ENCODE measurements at regions of chr1 and their contacts with region 1.

Region 1: DNA sequence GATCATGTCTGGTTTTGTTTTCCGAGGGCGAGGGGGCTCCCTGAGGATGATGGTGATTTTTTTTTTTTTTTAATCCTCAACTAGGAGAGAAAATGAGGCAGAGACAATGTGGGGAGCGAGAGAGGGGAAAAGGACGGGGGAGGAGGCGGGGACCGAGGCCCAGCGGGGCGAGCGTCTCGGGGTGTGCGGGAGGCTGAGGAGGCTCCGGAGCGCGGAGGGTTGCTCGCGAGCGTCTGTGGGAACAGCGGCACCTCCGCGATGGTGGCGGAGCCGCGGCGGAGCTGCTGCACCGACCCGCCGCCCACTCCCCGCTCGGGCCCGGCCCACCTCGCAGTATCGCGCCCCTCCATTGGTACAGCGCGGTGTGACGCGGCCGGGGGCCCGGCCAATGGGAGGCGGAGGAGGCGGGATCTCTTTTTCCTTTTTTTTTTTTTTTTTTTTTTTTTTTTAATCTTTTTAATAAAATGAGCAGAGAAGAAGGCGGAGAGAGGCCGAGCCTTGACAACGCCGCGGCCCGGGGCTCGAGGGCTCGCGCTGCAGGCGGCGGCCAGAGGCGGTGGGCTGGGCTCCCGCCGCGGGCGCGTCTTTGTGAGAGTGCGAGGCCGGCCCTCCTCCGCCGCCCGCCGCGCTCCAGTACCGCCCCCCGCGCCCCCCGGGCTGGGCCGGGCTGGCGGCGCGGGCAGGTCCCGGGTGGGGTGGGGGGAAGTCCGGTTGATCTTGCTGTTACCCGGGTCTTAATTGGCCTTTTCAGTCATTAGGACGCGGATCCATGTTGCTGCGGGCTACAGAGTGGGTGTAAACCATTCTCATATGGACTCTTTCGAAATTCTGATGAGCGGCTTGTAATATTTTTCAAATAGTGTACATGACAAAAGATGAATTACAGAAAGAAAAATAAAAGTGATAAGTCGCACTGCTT is at the start of gene RERE:
- DNase-seq: peak; percentile 97
- ATAC-seq: peak; percentile 95
- H3K4me3 Mint-ChIP-seq: peak within 1 kb of the TSS; percentile 77
- H3K27ac Mint-ChIP-seq: peak within 1 kb of the TSS; percentile 96
- H3K4me1 Mint-ChIP-seq: peaks cover 44% of the 10 kb centered on the region
- H3K27me3 Mint-ChIP-seq: peaks cover 2% of the 10 kb centered on the region
- total RNA-seq, gene RERE: 57.4 to 71.6 TPM

Region 2: GRCh38 chr1:8643542-8644536 is 173.8 kb before region 1 on chr1:
- CTCF ChIA-PET with region 1: no interaction called
- POLR2A ChIA-PET with region 1: no interaction called
- intact Hi-C with region 1: no loop called
- DNase-seq: peak; percentile 11
- ATAC-seq: no peak
- H3K4me3 Mint-ChIP-seq: no peak overlapping the region
- H3K27ac Mint-ChIP-seq: no peak overlapping the region
- H3K4me1 Mint-ChIP-seq: peaks cover 40% of the 10 kb centered on the region
- H3K27me3 Mint-ChIP-seq: no peaks in the 10 kb centered on the region

Region 3: GRCh38 chr1:8702850-8703810 is 114.5 kb before region 1 on chr1:
- CTCF ChIA-PET with region 1: no interaction called
- POLR2A ChIA-PET with region 1: no interaction called
- intact Hi-C with region 1: loop called in 1 of 2 experiments (anchors 1 kb)
- DNase-seq: peak; percentile 85
- ATAC-seq: peak; percentile 45
- H3K4me3 Mint-ChIP-seq: peak overlapping the region; percentile 83
- H3K27ac Mint-ChIP-seq: peak overlapping the region; percentile 76
- H3K4me1 Mint-ChIP-seq: peaks cover 32% of the 10 kb centered on the region
- H3K27me3 Mint-ChIP-seq: peaks cover 31% of the 10 kb centered on the region

Region 4: GRCh38 chr1:8848663-8849386 is 31.2 kb after region 1 on chr1:
- CTCF ChIA-PET with region 1: interaction called, 11 read pairs
- POLR2A ChIA-PET with region 1: no interaction called
- intact Hi-C with region 1: loop called in 1 of 2 experiments (anchors 5 kb)
- DNase-seq: peak; percentile 89
- ATAC-seq: peak; percentile 98
- H3K4me3 Mint-ChIP-seq: no peak overlapping the region
- H3K27ac Mint-ChIP-seq: no peak overlapping the region
- H3K4me1 Mint-ChIP-seq: peaks cover 7% of the 10 kb centered on the region
- H3K27me3 Mint-ChIP-seq: no peaks in the 10 kb centered on the region

Region 5: GRCh38 chr1:8873506-8874229 is 56.0 kb after region 1 on chr1:
- CTCF ChIA-PET with region 1: no interaction called
- POLR2A ChIA-PET with region 1: no interaction called
- intact Hi-C with region 1: loop called in 1 of 2 experiments (anchors 1 kb)
- DNase-seq: peak; percentile 92
- ATAC-seq: peak; percentile 68
- H3K4me3 Mint-ChIP-seq: peak overlapping the region; percentile 90
- H3K27ac Mint-ChIP-seq: peak overlapping the region; percentile 99
- H3K4me1 Mint-ChIP-seq: peaks cover 69% of the 10 kb centered on the region
- H3K27me3 Mint-ChIP-seq: no peaks in the 10 kb centered on the region

Region 6: DNA sequence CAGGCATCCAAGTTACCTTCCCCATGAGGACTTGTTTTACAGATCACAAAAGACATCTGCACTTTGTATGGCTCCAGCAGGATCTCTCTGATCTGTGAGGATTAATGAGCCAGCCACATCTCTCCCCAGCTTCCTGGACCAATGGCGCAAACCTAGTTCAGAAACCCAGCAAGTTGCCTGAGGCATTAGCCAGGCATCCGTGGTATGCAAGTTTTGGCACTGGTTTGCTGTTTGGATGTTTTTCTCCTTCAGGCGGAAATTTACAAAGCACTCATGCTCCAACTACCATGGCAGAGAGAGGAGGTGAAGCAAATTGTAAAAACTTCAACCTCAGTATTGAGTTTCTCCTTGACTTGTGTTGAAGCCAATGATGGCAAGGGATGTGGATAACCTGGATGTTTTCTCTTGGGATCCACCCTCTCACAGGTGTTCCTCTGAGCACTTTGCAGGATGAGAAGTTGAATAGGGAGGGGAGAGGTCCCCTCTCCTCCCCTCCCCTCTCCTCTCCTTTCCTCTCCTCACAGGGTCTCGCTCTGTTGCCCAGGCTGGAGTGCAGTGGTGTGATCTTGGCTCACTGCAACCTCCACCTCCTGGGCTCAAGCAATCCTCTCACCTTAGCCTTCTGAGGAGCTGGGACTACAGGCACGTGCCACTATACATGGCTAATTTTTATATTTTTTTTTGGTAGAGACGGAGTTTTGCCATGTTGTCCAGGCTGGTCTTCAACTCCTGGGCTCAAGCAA is 86.4 kb after region 1 on chr1:
- CTCF ChIA-PET with region 1: no interaction called
- POLR2A ChIA-PET with region 1: interaction called, 11 read pairs
- intact Hi-C with region 1: loop called in 1 of 2 experiments (anchors 1 kb)
- DNase-seq: no peak
- ATAC-seq: no peak
- H3K4me3 Mint-ChIP-seq: no peak overlapping the region
- H3K27ac Mint-ChIP-seq: peak overlapping the region; percentile 48
- H3K4me1 Mint-ChIP-seq: peaks cover 46% of the 10 kb centered on the region
- H3K27me3 Mint-ChIP-seq: no peaks in the 10 kb centered on the region

Region 7: DNA sequence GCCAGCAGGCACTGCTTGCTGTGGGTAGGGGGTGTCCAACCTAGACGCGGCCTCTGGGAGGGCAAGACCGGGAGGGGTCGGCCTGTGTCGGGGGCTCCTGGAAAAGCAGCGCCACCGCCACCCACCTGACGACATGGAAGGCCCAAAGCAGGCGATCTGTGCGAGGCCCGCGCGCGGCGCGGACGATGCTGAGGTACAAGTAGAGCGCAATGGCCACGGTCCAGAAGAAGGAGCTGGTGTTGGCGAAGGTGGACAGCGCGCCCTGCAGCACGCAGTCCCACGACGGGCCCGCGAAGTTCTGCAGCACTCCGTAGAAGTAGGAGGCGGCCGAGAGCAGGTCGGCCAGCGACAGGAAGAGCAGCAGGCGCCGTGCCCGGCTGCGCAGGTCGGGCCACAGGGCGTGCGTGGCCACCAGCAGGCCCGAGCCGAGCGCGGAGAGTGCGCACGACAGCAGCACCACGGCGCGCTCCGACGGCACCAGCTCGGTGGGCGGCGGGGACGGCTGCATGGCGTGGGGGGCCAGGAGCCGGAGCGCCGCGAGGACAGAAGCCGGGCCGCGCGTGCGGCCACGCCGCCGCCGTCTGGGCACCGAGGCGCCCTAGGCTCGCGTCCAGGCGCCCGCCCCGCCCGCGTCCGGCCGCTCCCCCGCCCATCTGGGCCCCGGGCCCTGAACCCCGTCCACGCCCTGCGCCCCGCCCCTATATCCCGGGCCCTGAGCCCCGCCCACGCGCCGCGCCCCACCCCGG is 311.0 kb after region 1 on chr1 and contains the start of gene GPR157:
- CTCF ChIA-PET with region 1: no interaction called
- POLR2A ChIA-PET with region 1: no interaction called
- intact Hi-C with region 1: loop called in 1 of 2 experiments (anchors 2 kb)
- DNase-seq: peak; percentile 93
- ATAC-seq: peak; percentile 84
- H3K4me3 Mint-ChIP-seq: peak within 1 kb of the TSS; percentile 83
- H3K27ac Mint-ChIP-seq: peak within 1 kb of the TSS; percentile 67
- H3K4me1 Mint-ChIP-seq: peaks cover 37% of the 10 kb centered on the region
- H3K27me3 Mint-ChIP-seq: no peaks in the 10 kb centered on the region
- total RNA-seq, gene GPR157: 2.7 to 3.6 TPM